ENCODE measurements at regions of chr11 and their contacts with region 1.

Region 1: GRCh38 chr11:4626207-4627099 is 10.8 kb upstream of the OR51D1 start:
- DNase-seq: peak in 4 of 5 donors; percentile 8 to 45 (median 22)
- H3K4me3 ChIP-seq: no peak overlapping the region
- H3K4me3 Mint-ChIP-seq: no peak overlapping the region
- H3K27ac ChIP-seq: no peak overlapping the region
- H3K27ac Mint-ChIP-seq: no peak overlapping the region
- H3K4me1 ChIP-seq: no peaks in the 10 kb centered on the region
- H3K4me1 Mint-ChIP-seq: no peaks in the 10 kb centered on the region
- H3K27me3 ChIP-seq: no peaks in the 10 kb centered on the region
- H3K27me3 Mint-ChIP-seq: peaks cover 32 to 35% of the 10 kb centered on the region in 2 donors

Region 2: GRCh38 chr11:4464216-4465159 is 162.0 kb before region 1 on chr11:
- CTCF ChIA-PET with region 1: no interaction called
- POLR2A ChIA-PET with region 1: no interaction called
- intact Hi-C with region 1: no loop called
- DNase-seq: no peak
- H3K4me3 ChIP-seq: no peak overlapping the region
- H3K4me3 Mint-ChIP-seq: no peak overlapping the region
- H3K27ac ChIP-seq: no peak overlapping the region
- H3K27ac Mint-ChIP-seq: peak overlapping the region in 1 of 7 donors; percentile 39
- H3K4me1 ChIP-seq: no peaks in the 10 kb centered on the region
- H3K4me1 Mint-ChIP-seq: peaks cover 0 to 5% (median 2%) of the 10 kb centered on the region in 4 donors
- H3K27me3 ChIP-seq: no peaks in the 10 kb centered on the region
- H3K27me3 Mint-ChIP-seq: peaks cover 2 to 6% of the 10 kb centered on the region in 2 donors

Region 3: GRCh38 chr11:4636962-4637661 is 10.7 kb after region 1 on chr11 and contains the start of gene OR51D1:
- CTCF ChIA-PET with region 1: interaction called, 34 read pairs
- POLR2A ChIA-PET with region 1: no interaction called
- intact Hi-C with region 1: no loop called
- DNase-seq: peak; percentile 47 to 63 (median 59)
- H3K4me3 ChIP-seq: no peak within 1 kb of the TSS
- H3K4me3 Mint-ChIP-seq: no peak within 1 kb of the TSS
- H3K27ac ChIP-seq: no peak within 1 kb of the TSS
- H3K27ac Mint-ChIP-seq: no peak within 1 kb of the TSS
- H3K4me1 ChIP-seq: no peaks in the 10 kb centered on the region
- H3K4me1 Mint-ChIP-seq: no peaks in the 10 kb centered on the region
- H3K27me3 ChIP-seq: no peaks in the 10 kb centered on the region
- H3K27me3 Mint-ChIP-seq: peaks cover 6 to 9% of the 10 kb centered on the region in 2 donors
- total RNA-seq, gene OR51D1: not detected

Measured in CD4-positive, alpha-beta memory T cell (primary cell).